GM18951 (cell line): ENCODE measurements at regions of chr12 and their contacts with region 1.

Region 1: DNA sequence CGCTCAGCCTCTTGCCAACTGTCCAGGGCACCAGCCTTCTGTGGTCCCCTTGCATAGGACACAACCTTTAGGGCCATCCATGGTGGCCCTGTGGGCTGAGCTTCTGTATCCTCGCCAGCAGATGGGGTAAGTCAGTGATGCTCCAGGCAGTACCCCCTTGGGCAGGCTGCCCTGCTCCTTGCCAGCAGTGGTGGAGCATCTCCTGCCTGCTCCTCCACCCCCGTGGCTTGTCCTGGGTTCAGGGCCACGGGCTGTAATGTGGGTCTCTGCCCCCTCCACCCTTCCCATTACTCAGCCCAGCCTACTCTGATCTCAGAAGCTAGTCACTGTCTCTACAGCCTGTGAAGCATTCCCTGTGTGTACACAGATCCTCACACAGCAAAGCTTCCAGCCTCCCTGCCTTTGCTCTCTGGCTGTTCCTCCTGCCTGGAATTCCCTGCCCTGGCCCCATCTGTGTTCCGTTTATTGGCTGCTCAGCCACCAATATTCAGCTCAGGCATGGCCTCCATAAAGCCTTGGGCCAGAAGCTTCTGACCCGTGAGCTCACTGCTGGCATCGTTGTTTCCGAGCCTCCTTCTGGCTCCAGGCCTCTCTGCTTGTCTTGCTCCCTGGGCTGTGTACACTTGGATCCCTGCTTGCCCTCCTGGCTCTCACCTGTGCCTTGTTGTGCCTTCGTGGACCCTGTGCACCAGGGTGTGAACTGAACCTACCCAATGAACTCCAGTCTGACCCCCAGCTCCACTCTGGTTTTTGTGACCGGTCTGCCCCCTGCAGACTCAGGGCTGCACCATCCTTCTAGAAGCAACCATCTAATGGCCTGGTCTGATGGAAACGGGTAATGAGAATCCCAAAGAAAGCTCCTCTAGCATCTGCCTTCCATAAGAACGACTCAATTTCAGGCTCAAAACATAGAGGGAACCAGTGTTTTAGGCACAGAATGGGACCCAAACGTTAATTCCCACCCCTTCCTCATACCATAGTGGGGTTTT is 177.0 kb upstream of the PRMT8 start:
- POLR2A ChIP-seq: no peak

Region 2: GRCh38 chr12:3797531-3798049 is 483.6 kb after region 1 on chr12:
- in situ Hi-C with region 1: loop called (anchors 10 kb)
- POLR2A ChIP-seq: no peak